ENCODE measurements at regions of chr17 and their contacts with region 1.

Region 1: GRCh38 chr17:56592487-56593085 is 913 bp upstream of the NOG start:
- DNase-seq: peak; percentile 64 to 84
- ATAC-seq: peak; percentile 44 to 74
- H3K4me3 ChIP-seq: peak overlapping the region; percentile 51
- H3K27ac ChIP-seq: peak overlapping the region; percentile 75 to 87; a peak in 5 of 6 replicates
- H3K4me1 ChIP-seq: peaks cover 32% of the 10 kb centered on the region
- CTCF ChIP-seq: peak; percentile 99
- EP300 ChIP-seq: no peak
- POLR2A ChIP-seq: no peak
- RAD21 ChIP-seq: peak; percentile 84 to 99

Region 2: GRCh38 chr17:56577843-56578204 is 14.8 kb before region 1 on chr17:
- CTCF ChIA-PET with region 1: interaction called, 33 read pairs
- POLR2A ChIA-PET with region 1: no interaction called
- DNase-seq: no peak
- ATAC-seq: no peak
- H3K4me3 ChIP-seq: no peak overlapping the region
- H3K27ac ChIP-seq: no peak overlapping the region
- H3K4me1 ChIP-seq: no peaks in the 10 kb centered on the region
- CTCF ChIP-seq: no peak
- EP300 ChIP-seq: no peak
- POLR2A ChIP-seq: no peak
- RAD21 ChIP-seq: no peak

Region 3: DNA sequence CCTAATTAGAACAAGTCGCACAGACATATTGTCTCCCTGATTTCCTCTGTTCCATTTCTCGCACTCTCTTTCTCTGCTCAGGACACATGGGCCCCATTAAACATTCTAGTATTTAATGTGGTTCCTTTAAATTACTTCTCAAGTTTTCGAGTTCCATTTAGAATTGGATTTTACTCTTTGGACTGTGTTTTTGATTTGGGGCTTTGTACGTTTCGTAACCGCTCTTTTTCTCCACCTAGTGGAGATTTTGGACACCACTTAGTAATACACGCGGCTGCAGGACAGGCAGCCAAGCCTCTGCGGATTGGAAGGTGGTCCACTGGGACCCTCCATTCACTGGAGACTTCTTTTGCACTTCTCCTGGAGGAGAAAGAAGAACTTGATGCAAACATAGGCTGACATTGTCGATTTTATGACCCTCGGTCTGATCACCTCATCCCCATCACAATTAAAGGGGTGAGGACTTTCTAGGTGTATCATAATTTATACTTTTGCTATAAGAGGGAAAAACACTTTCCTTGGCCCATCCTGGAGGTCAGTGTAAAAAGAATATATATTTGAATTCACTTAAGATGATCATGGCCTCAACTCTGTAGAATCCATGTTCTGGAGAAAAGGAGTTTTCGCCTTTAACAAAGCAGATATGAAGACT is 86.7 kb after region 1 on chr17:
- CTCF ChIA-PET with region 1: interaction called, 25 read pairs
- POLR2A ChIA-PET with region 1: interaction called, 3 read pairs
- DNase-seq: peak; percentile 23 to 66
- ATAC-seq: peak in 1 of 2 experiments; percentile 85; a peak in 3 of 6 replicates
- H3K4me3 ChIP-seq: no peak overlapping the region
- H3K27ac ChIP-seq: no peak overlapping the region
- H3K4me1 ChIP-seq: peaks cover 5% of the 10 kb centered on the region; the same call in 1 of the 3 replicates
- CTCF ChIP-seq: peak; percentile 66
- EP300 ChIP-seq: no peak
- POLR2A ChIP-seq: no peak
- RAD21 ChIP-seq: peak; percentile 54 to 61

Region 4: DNA sequence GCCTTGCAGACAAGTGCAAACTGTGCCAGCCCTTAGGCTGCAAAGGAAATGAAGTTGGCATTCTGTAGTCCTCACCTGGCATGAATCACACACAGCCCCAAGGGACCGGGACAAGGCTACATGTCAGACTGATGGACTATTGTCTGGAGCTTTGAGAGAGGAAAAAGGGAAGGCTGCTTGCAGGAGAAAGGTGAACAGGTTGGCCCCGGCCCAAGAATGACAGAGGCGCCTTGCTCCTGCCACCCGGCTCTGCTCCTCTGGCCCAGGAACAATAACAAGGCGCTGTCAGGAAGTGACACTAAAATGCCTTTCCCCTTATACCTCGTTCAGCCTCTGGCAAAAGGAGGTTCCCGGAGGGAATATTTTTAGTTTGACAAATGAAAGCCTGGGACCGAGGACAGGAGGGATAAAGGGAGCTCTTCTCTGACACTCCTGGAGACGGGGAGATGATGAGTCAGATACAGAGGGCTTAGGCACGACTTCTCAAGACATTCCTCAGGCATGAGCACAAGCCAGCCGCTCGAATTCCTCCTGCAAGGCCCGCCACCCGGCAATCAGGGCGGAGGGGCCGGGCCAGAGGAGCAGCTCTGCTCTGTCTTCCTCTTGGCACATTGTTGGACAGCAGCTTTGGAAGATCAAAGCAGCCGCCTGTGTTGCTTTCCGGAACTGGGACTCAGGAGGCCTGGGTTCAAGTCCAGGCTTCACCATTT is 106.8 kb after region 1 on chr17:
- CTCF ChIA-PET with region 1: interaction called, 27 read pairs
- POLR2A ChIA-PET with region 1: interaction called, 5 read pairs
- DNase-seq: peak; percentile 97 to 99
- ATAC-seq: peak; percentile 98 to 99
- H3K4me3 ChIP-seq: 0 out of 3 replicates have a peak overlapping the region, but pooled peaks have one; percentile 13
- H3K27ac ChIP-seq: peak overlapping the region; percentile 66 to 84
- H3K4me1 ChIP-seq: peaks cover 21% of the 10 kb centered on the region
- CTCF ChIP-seq: no peak
- EP300 ChIP-seq: peak in 1 of 2 experiments; percentile 71; a peak in 2 of 5 replicates
- POLR2A ChIP-seq: no peak
- RAD21 ChIP-seq: no peak

Region 5: DNA sequence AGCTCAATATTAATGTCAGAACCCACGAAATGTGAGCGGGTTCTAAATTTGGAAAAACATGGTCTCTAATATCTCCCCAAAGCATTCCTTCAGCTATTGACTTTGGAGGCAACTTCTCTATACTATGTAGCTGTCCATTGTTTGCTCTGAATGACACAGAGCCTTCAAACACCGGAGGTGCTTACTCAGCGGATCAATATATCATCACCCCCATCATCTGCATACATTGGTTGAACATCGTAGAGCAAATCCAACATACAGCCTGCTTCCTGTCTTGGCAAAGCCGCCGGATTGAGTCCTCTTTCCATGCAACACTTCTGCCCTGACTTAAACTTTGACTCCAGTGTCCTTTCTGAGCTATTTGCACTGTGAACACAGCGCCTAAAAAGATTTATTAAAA is 179.9 kb after region 1 on chr17:
- CTCF ChIA-PET with region 1: interaction called, 28 read pairs
- POLR2A ChIA-PET with region 1: no interaction called
- DNase-seq: no peak
- ATAC-seq: no peak
- H3K4me3 ChIP-seq: no peak overlapping the region
- H3K27ac ChIP-seq: no peak overlapping the region
- H3K4me1 ChIP-seq: no peaks in the 10 kb centered on the region
- CTCF ChIP-seq: no peak
- EP300 ChIP-seq: no peak
- POLR2A ChIP-seq: no peak
- RAD21 ChIP-seq: no peak

Measured in A549 (cell line).